ENCODE measurements at regions of chr1 and their contacts with region 1.

Region 1: DNA sequence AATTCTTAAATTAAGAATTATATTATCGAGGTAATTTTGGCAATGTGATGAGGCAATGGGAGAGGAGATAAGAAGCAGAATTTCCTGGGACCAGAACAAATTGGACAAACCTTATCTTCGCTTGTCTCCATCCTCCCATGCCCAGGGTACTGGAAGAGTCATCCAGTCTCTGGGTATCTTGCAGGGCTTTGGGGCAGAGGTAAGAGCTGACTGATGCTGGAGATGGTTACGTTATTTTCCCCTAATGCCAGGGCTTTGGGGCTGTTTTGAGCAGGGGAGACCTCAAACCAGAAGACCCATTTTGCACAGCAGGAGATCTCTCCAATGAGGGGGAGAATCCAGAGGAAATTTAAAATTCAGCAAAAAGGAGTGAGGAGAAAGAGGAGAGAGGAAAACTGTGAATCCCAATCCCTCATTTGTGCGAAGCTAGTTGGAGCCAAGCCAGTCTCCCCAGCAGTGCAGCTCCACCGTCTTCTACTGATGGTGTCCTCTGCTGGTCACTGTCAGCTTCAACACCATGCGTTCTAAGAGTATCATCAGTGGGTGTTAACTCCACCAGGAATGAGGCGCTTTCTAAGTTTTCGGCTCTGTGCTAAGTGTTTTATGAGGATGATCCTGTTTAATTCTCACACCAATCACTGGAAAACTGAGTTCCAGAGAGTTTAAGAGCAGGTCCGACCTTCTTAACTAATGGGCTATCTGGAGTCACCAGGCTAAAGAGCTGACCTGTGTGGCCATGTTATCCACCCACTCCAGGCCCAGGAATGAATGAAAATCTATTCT is 86.8 kb upstream of the CD34 start:
- DNase-seq: peak; percentile 70
- ATAC-seq: peak; percentile 88
- H3K4me3 Mint-ChIP-seq: no peak overlapping the region
- H3K27ac Mint-ChIP-seq: no peak overlapping the region
- H3K4me1 Mint-ChIP-seq: no peaks in the 10 kb centered on the region
- H3K27me3 Mint-ChIP-seq: no peaks in the 10 kb centered on the region
- CTCF ChIP-seq: peak; percentile 82

Region 2: GRCh38 chr1:208007938-208008342 is 10.3 kb after region 1 on chr1:
- CTCF ChIA-PET with region 1: interaction called, 11 read pairs
- POLR2A ChIA-PET with region 1: no interaction called
- intact Hi-C with region 1: no loop called
- DNase-seq: no peak
- ATAC-seq: no peak
- H3K4me3 Mint-ChIP-seq: no peak overlapping the region
- H3K27ac Mint-ChIP-seq: no peak overlapping the region
- H3K4me1 Mint-ChIP-seq: no peaks in the 10 kb centered on the region
- H3K27me3 Mint-ChIP-seq: no peaks in the 10 kb centered on the region
- CTCF ChIP-seq: no peak

Measured in activated CD8-positive, alpha-beta T cell treated with anti-CD3 and anti-CD28 coated beads for 36 hours (primary cell).